ENCODE measurements at regions of chr10 and their contacts with region 1.

Region 1: GRCh38 chr10:28939281-28940157 is 262.2 kb downstream of the BAMBI start:
- DNase-seq: peak; percentile 92 to 100
- ATAC-seq: peak; percentile 94 to 96
- H3K4me3 ChIP-seq: peak overlapping the region; percentile 35
- H3K27ac ChIP-seq: peak overlapping the region; percentile 85
- H3K4me1 ChIP-seq: peaks cover 35% of the 10 kb centered on the region
- CTCF ChIP-seq: peak; percentile 89
- EP300 ChIP-seq: peak; percentile 95 to 97
- POLR2A ChIP-seq: no peak
- RAD21 ChIP-seq: peak; percentile 64 to 68

Region 2: GRCh38 chr10:28686835-28687682 is 252.5 kb before region 1 on chr10:
- CTCF ChIA-PET with region 1: interaction called, 13 read pairs
- POLR2A ChIA-PET with region 1: interaction called, 4 read pairs
- DNase-seq: no peak
- ATAC-seq: no peak
- H3K4me3 ChIP-seq: no peak overlapping the region
- H3K27ac ChIP-seq: no peak overlapping the region
- H3K4me1 ChIP-seq: peaks cover 37% of the 10 kb centered on the region
- CTCF ChIP-seq: no peak
- EP300 ChIP-seq: no peak
- POLR2A ChIP-seq: no peak
- RAD21 ChIP-seq: no peak

Region 3: DNA sequence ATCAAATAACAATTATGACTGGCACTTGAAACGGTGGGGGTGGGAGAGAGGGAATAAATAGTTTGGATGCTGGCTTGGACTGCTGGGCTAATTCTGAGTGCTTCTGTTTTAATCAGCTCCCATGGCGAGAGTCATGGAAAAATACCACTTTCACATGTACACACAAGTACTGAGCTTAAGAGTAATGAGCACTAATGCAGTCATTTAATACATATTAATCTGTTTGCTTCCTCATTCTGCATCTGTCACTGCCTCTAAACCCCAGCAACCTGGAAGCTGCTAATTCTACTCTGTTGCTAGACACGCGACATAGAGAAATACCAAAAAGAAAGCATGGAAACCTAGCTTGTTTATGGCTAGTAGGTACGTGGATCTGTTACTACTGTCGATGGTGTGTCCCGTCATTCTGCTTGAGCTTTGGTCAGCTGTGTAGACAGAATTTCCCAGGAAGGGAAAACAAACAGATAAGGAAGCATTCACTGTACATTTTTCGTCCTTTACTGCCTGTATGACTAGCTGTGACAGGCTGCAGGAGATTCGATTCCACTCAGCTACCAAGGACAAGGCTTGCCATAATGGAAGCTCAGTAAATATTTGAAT is 23.4 kb before region 1 on chr10:
- CTCF ChIA-PET with region 1: interaction called, 17 read pairs
- POLR2A ChIA-PET with region 1: interaction called, 5 read pairs
- DNase-seq: no peak
- ATAC-seq: no peak
- H3K4me3 ChIP-seq: no peak overlapping the region
- H3K27ac ChIP-seq: peak overlapping the region in 1 of 2 experiments; percentile 14; a peak in 1 of 6 replicates
- H3K4me1 ChIP-seq: peaks cover 31% of the 10 kb centered on the region
- CTCF ChIP-seq: no peak
- EP300 ChIP-seq: no peak
- POLR2A ChIP-seq: no peak
- RAD21 ChIP-seq: no peak

Region 4: DNA sequence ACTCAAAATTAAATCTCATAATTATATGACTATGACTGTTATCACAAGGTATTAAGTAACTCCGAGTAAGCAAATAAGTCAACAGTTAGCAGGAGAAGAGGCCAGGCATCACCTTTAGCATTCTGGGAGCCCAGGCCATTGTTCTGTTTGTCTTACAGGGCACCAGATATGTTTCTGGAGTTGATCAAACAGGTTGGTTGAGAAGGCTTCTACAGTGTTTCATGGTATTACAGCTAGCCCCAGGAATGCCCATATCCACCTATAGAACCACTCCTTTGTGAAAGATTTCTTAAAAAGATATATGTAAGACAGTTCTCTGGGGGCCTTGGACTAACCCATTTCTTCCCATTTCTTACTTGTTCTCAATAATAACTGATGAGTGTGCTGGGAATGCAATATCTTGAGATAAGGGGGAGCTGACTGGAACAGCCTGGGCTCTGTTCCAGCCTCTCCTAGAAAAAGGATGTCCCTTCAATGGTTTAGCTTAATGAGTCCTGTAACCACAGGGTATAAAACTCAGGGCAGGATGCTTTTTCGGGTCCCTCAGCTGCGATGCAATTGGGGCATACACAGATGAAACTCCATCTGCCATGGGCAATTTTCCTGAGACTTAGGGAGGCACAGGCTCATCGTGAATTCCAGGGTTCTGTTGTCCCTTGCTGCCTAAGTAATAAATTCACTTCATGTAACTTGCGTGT is 24.2 kb after region 1 on chr10:
- CTCF ChIA-PET with region 1: interaction called, 18 read pairs
- POLR2A ChIA-PET with region 1: no interaction called
- DNase-seq: no peak
- ATAC-seq: no peak
- H3K4me3 ChIP-seq: no peak overlapping the region
- H3K27ac ChIP-seq: no peak overlapping the region
- H3K4me1 ChIP-seq: no peaks in the 10 kb centered on the region
- CTCF ChIP-seq: no peak
- EP300 ChIP-seq: no peak
- POLR2A ChIP-seq: no peak
- RAD21 ChIP-seq: no peak

Region 5: GRCh38 chr10:28991326-28992270 is 52.1 kb after region 1 on chr10:
- CTCF ChIA-PET with region 1: interaction called, 36 read pairs
- POLR2A ChIA-PET with region 1: interaction called, 6 read pairs
- DNase-seq: peak; percentile 60 to 88
- ATAC-seq: peak; percentile 89 to 92
- H3K4me3 ChIP-seq: no peak overlapping the region
- H3K27ac ChIP-seq: peak overlapping the region; percentile 65 to 80
- H3K4me1 ChIP-seq: peaks cover 24% of the 10 kb centered on the region
- CTCF ChIP-seq: peak; percentile 92
- EP300 ChIP-seq: peak in 1 of 2 experiments; percentile 35; a peak in 1 of 5 replicates
- POLR2A ChIP-seq: no peak
- RAD21 ChIP-seq: peak; percentile 98